Testis (tissue), 5 donors: ENCODE measurements at regions of chr6 and their contacts with region 1.

Region 1: DNA sequence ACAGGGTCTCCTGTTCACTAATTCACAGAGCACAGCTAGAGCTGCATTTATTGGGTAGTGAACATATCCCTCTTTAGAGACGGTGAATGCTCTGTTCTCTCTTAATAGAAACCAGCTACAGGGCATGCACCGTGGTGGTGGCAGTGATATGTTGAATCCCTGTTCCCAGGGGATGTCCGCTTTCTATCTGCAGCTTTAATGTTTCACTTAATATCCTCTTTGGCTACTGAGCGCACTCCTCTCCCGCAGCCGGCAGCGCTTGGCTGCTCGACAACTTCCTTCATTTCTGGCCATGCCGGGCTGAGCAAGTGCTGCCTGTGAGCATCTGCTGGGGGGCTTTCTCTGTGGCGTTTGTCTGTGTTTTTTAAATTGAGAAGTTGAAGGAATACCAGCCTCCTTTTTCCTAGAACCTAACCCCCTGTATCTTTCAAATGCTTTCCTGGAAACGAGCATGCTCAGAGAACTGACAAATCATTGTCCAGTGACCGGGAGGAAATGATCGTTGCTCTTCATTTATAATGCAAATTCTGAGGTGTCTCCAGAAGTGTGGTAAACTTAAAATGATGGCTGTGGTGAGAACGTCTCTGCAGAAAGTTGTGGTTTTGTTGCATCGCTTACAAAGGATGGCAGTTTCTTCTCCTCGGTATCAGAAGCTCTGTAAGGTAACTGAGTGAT is 297.9 kb downstream of the UTRN start:
- DNase-seq: peak; percentile 43
- H3K4me3 ChIP-seq: no peak overlapping the region
- H3K27ac ChIP-seq: no peak overlapping the region
- H3K4me1 ChIP-seq: no peaks in the 10 kb centered on the region
- H3K27me3 ChIP-seq: no peaks in the 10 kb centered on the region
- CTCF ChIP-seq: no peak
- POLR2A ChIP-seq: no peak

Region 2: DNA sequence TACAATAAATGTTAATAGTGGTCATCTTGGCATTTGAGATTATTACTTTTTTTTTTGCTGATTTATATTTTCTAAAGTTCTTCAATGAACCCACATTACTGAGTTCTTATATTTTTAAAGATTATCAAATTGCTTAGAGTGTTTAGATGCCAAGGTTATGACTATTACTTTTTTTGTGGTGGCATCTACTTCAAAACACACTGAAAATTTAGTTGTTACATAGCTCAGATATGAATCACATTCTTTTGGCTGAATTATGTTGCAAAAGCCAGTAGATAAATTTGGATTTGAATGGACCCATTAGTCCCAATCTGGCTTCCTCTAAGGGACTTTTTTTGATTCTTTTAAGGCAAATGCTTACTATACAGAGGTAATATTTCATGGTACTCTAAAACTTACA is 289.1 kb before region 1 on chr6:
- intact Hi-C with region 1: no loop called
- DNase-seq: no peak
- H3K4me3 ChIP-seq: no peak overlapping the region
- H3K27ac ChIP-seq: no peak overlapping the region
- H3K4me1 ChIP-seq: peaks cover 13% of the 10 kb centered on the region
- H3K27me3 ChIP-seq: no peaks in the 10 kb centered on the region
- CTCF ChIP-seq: no peak
- POLR2A ChIP-seq: no peak

Region 3: GRCh38 chr6:144321839-144322591 is 261.1 kb before region 1 on chr6:
- intact Hi-C with region 1: no loop called
- DNase-seq: no peak
- H3K4me3 ChIP-seq: no peak overlapping the region
- H3K27ac ChIP-seq: no peak overlapping the region
- H3K4me1 ChIP-seq: peaks cover 8% of the 10 kb centered on the region
- H3K27me3 ChIP-seq: no peaks in the 10 kb centered on the region
- CTCF ChIP-seq: no peak
- POLR2A ChIP-seq: no peak

Region 4: GRCh38 chr6:145214570-145214969 is 631.5 kb after region 1 on chr6:
- intact Hi-C with region 1: loop called (anchors 10 kb)
- DNase-seq: no peak
- H3K4me3 ChIP-seq: no peak overlapping the region
- H3K27ac ChIP-seq: no peak overlapping the region
- H3K4me1 ChIP-seq: no peaks in the 10 kb centered on the region
- H3K27me3 ChIP-seq: no peaks in the 10 kb centered on the region
- CTCF ChIP-seq: peak in 2 of 3 experiments; percentile 15 to 59
- POLR2A ChIP-seq: no peak